Mammary epithelial cell (primary cell): ENCODE measurements at regions of chr2 and their contacts with region 1.

Region 1: GRCh38 chr2:21326152-21326551 is 202.4 kb downstream of the TDRD15 start:
- DNase-seq: no peak
- H3K4me3 ChIP-seq: no peak overlapping the region
- H3K27ac ChIP-seq: no peak overlapping the region
- H3K4me1 ChIP-seq: no peaks in the 10 kb centered on the region
- H3K27me3 ChIP-seq: no peaks in the 10 kb centered on the region
- CTCF ChIP-seq: peak in 1 of 2 donors; percentile 39

Region 2: DNA sequence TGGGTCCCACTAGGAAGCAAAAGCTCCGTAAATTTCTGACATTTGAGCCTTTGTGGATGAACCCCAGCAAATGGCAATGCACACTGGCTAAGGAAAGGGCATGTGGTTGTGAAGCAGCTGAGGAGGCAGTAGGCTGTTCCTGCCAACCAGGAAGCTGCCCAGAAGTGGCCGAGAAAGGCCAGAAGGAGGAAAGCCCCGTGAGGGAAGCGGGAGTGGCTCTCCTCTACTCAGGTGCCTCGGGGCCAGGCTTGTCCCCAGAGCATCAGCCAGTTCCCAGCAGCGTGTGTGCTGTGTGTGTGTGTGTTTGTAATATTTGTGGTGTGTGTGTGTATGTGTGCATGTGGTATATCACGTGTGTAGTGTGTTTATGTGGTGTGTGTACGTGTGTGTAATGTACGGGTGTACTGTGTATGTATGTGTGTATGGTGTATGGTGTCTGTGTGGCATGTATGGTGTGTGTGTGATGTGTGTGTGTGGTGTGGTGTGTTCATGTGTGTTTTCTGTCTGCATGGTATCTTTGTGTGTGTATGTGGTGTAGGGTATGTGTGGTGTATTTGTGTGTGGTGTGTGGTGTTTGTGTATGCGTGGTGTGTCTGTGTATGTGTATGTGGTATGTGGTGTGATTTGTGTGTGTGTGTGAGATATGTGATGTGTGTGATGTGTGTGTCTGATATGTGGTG is 372.9 kb before region 1 on chr2:
- CTCF ChIA-PET with region 1: no interaction called
- dilution Hi-C with region 1: no loop called
- in situ Hi-C with region 1: no loop called
- intact Hi-C with region 1: no loop called
- DNase-seq: no peak
- H3K4me3 ChIP-seq: no peak overlapping the region
- H3K27ac ChIP-seq: no peak overlapping the region
- H3K4me1 ChIP-seq: no peaks in the 10 kb centered on the region
- H3K27me3 ChIP-seq: no peaks in the 10 kb centered on the region
- CTCF ChIP-seq: no peak

Region 3: DNA sequence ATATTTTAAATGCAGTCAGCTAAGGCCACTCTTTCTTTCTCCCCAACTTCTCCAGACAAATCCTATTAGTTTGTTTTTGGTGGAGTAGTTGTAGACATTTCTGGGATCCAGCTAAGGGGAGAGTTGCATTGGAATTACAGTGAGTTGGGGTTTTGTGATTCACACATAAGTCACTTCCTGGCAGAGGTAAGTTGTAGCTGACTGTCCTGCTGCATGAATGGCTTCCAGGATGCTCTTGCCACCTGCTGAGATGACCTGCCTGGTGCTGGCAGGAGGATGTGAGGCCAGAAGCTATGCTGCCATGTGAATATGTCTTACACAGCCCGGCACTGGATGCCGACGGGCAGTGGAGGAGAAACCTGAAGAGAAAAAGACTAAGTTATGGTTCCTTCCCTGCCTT is 41.3 kb after region 1 on chr2:
- CTCF ChIA-PET with region 1: no interaction called
- dilution Hi-C with region 1: no loop called
- in situ Hi-C with region 1: no loop called
- intact Hi-C with region 1: loop called (anchors 5 kb)
- DNase-seq: peak; percentile 71
- H3K4me3 ChIP-seq: no peak overlapping the region
- H3K27ac ChIP-seq: no peak overlapping the region
- H3K4me1 ChIP-seq: peaks cover 14% of the 10 kb centered on the region
- H3K27me3 ChIP-seq: no peaks in the 10 kb centered on the region
- CTCF ChIP-seq: peak in 1 of 2 donors; percentile 6

Region 4: GRCh38 chr2:21395366-21395765 is 69.2 kb after region 1 on chr2:
- CTCF ChIA-PET with region 1: no interaction called
- dilution Hi-C with region 1: no loop called
- in situ Hi-C with region 1: no loop called
- intact Hi-C with region 1: loop called (anchors 1 kb)
- DNase-seq: no peak
- H3K4me3 ChIP-seq: no peak overlapping the region
- H3K27ac ChIP-seq: no peak overlapping the region
- H3K4me1 ChIP-seq: no peaks in the 10 kb centered on the region
- H3K27me3 ChIP-seq: no peaks in the 10 kb centered on the region
- CTCF ChIP-seq: peak; percentile 20 to 39